ENCODE measurements at regions of chr11 and their contacts with region 1.

Region 1: DNA sequence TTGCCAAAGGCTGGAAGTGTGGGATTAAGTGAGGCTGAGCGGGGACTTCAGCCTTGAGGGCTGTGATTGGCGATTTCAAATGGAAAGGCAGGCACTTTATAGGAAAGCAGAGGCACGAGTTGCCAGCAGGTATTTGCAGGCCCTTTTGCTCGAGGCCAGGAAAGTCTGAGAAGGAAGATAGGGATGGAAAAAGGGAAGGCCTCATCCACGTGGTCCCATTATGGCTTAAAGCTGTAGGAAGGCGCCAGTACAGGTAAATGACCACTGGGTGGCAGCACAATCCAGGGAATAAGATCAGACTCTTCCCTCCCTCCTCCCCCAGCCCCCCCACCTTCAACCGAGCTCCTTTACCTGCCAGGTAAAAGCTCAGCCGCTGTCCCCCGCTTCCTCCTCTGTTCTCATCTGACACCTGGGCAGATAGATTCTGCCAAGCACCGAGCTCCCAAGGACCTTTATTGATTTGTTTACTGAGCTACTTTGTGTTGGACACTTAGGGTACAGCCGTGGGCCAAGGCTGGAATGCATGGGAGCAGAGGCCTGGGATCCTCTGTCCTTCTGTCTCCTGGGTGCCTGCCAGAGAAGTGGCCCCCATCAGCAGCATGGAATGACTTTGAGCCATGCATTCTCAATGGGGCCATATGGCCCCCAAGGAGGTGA is 7.5 kb downstream of the P2RX3 start:
- DNase-seq: peak; percentile 52 to 87 (median 64)
- ATAC-seq: peak; percentile 93
- H3K4me3 ChIP-seq: no peak overlapping the region
- H3K4me3 Mint-ChIP-seq: no peak overlapping the region
- H3K27ac ChIP-seq: no peak overlapping the region
- H3K27ac Mint-ChIP-seq: no peak overlapping the region
- H3K4me1 ChIP-seq: peaks cover 12% of the 10 kb centered on the region
- H3K4me1 Mint-ChIP-seq: peaks cover 4% of the 10 kb centered on the region
- H3K27me3 ChIP-seq: peaks cover 0 to 3% of the 10 kb centered on the region in 2 experiments
- H3K27me3 Mint-ChIP-seq: no peaks in the 10 kb centered on the region
- CTCF ChIP-seq: peak; percentile 73

Region 2: GRCh38 chr11:57456960-57457642 is 111.4 kb after region 1 on chr11:
- CTCF ChIA-PET with region 1: interaction called, 6 read pairs
- POLR2A ChIA-PET with region 1: interaction called, 3 read pairs
- intact Hi-C with region 1: loop called in 1 of 2 experiments (anchors 10 kb)
- DNase-seq: peak; percentile 50 to 85 (median 66)
- ATAC-seq: peak; percentile 62
- H3K4me3 ChIP-seq: no peak overlapping the region
- H3K4me3 Mint-ChIP-seq: peak overlapping the region; percentile 83
- H3K27ac ChIP-seq: no peak overlapping the region
- H3K27ac Mint-ChIP-seq: no peak overlapping the region
- H3K4me1 ChIP-seq: peaks cover 42% of the 10 kb centered on the region
- H3K4me1 Mint-ChIP-seq: peaks cover 32% of the 10 kb centered on the region
- H3K27me3 ChIP-seq: peaks cover 33 to 36% of the 10 kb centered on the region in 2 experiments
- H3K27me3 Mint-ChIP-seq: peaks cover 51% of the 10 kb centered on the region
- CTCF ChIP-seq: peak; percentile 98

Region 3: GRCh38 chr11:57638005-57638781 is 292.5 kb after region 1 on chr11:
- CTCF ChIA-PET with region 1: interaction called, 4 read pairs
- POLR2A ChIA-PET with region 1: no interaction called
- intact Hi-C with region 1: loop called (anchors 1 kb)
- DNase-seq: peak in 1 of 14 experiments; percentile 18
- ATAC-seq: peak; percentile 40
- H3K4me3 ChIP-seq: peak overlapping the region; percentile 59
- H3K4me3 Mint-ChIP-seq: peak overlapping the region; percentile 92
- H3K27ac ChIP-seq: no peak overlapping the region
- H3K27ac Mint-ChIP-seq: no peak overlapping the region
- H3K4me1 ChIP-seq: peaks cover 24% of the 10 kb centered on the region
- H3K4me1 Mint-ChIP-seq: peaks cover 21% of the 10 kb centered on the region
- H3K27me3 ChIP-seq: peaks cover 14 to 19% of the 10 kb centered on the region in 2 experiments
- H3K27me3 Mint-ChIP-seq: peaks cover 47% of the 10 kb centered on the region
- CTCF ChIP-seq: no peak

Region 4: DNA sequence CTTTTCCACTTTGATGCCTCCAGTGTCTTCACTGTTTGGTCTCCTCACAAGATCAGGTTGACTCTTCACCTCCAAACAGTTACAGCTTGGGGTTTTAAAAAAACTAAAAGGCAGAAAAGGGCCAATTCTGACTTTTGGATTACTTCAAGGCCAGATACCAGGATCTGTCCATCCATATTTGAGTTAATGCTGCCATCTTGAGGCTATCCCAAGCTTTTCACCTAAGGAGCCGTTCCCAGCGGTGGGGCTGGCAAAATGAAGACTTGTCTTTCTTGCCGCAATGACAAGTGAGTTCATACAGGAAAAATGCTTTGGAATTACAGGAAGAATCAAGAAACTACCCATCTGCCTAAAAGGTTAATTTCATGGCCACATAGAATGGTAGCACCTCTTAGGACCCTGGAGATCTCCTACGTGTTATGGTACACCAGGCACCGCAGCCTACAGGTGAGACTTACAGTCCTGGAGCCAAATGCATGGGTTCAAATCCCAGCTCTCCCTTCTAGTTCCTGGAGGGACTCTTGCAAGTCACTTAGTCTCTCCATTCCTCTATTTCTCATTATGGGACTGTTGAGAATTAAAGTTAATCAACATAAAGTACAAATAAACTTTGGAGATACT is 1168.2 kb after region 1 on chr11:
- CTCF ChIA-PET with region 1: no interaction called
- POLR2A ChIA-PET with region 1: no interaction called
- intact Hi-C with region 1: loop called in 1 of 2 experiments (anchors 10 kb)
- DNase-seq: peak in 3 of 14 experiments; percentile 15 to 42 (median 38)
- ATAC-seq: no peak
- H3K4me3 ChIP-seq: no peak overlapping the region
- H3K4me3 Mint-ChIP-seq: no peak overlapping the region
- H3K27ac ChIP-seq: no peak overlapping the region
- H3K27ac Mint-ChIP-seq: no peak overlapping the region
- H3K4me1 ChIP-seq: no peaks in the 10 kb centered on the region
- H3K4me1 Mint-ChIP-seq: peaks cover 4% of the 10 kb centered on the region
- H3K27me3 ChIP-seq: no peaks in the 10 kb centered on the region
- H3K27me3 Mint-ChIP-seq: no peaks in the 10 kb centered on the region
- CTCF ChIP-seq: peak; percentile 28

Region 5: GRCh38 chr11:58788355-58789023 is 1442.8 kb after region 1 on chr11:
- CTCF ChIA-PET with region 1: no interaction called
- POLR2A ChIA-PET with region 1: no interaction called
- intact Hi-C with region 1: loop called in 1 of 2 experiments (anchors 5 kb)
- DNase-seq: peak; percentile 4 to 71 (median 24)
- ATAC-seq: peak; percentile 95
- H3K4me3 ChIP-seq: no peak overlapping the region
- H3K4me3 Mint-ChIP-seq: no peak overlapping the region
- H3K27ac ChIP-seq: no peak overlapping the region
- H3K27ac Mint-ChIP-seq: no peak overlapping the region
- H3K4me1 ChIP-seq: no peaks in the 10 kb centered on the region
- H3K4me1 Mint-ChIP-seq: no peaks in the 10 kb centered on the region
- H3K27me3 ChIP-seq: no peaks in the 10 kb centered on the region
- H3K27me3 Mint-ChIP-seq: peaks cover 7% of the 10 kb centered on the region
- CTCF ChIP-seq: peak; percentile 90

Measured in CD4-positive, alpha-beta T cell (primary cell).